GM12878 (cell line): ENCODE measurements at regions of chr20 and their contacts with region 1.

Region 1: GRCh38 chr20:46552460-46553420 is 2.3 kb upstream of the OCSTAMP start:
- DNase-seq: peak; percentile 85
- ATAC-seq: peak; percentile 85
- H3K4me3 ChIP-seq: peak overlapping the region; percentile 50; the same call in 1 of the 2 replicates
- H3K27ac ChIP-seq: peak overlapping the region; percentile 76
- H3K4me1 ChIP-seq: peaks cover 70% of the 10 kb centered on the region
- H3K27me3 ChIP-seq: no peaks in the 10 kb centered on the region
- CTCF ChIP-seq: no peak
- EP300 ChIP-seq: peak; percentile 67 to 74; a peak in 3 of 4 replicates
- POLR2A ChIP-seq: no peak
- RAD21 ChIP-seq: no peak

Region 2: DNA sequence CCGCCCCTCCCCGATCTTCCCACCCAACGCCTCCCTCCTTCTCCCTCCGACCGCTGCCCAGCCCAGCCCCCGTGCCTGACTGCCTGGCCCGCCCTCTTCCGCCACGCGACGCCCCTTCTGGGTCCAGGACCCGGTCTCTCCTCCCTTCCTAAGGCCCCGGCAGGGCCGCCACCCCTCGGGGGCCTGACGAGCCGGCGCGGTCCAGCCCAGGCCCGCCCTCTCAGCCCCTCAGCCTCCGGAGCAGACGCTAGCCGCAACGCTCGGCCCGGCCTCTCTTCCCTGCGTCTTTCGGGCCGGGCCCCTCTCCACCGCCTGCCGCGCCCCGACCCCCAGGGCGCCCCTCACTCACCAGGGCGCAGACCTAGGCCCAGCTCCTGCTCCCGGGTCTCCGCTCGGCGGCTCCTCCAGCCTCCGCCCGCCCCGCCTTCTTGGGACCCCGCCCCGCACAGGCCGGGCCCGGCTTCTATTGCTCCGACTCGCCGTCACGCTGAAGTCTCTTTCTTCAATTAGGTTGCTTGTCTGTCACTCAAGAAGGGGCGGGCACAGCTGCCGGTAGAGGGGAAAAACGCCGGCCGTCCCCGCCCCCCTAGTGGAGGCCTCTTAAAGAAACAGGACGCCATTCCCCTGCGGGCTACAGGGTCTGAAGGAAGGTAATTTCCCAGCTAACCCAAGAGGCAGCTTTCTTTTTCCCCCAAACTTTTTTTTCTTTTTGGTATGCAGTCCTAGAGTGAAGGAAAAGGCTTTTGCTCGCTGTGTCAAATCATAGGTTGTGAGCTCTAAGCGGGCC is 146.3 kb before region 1 on chr20 and contains the start of gene ELMO2:
- CTCF ChIA-PET with region 1: no interaction called
- POLR2A ChIA-PET with region 1: no interaction called
- RAD21 ChIA-PET with region 1: no interaction called
- SMC1A ChIA-PET with region 1: no interaction called
- in situ Hi-C with region 1: no loop called
- intact Hi-C with region 1: no loop called
- DNase-seq: peak; percentile 76
- ATAC-seq: peak; percentile 91
- H3K4me3 ChIP-seq: peak within 1 kb of the TSS; percentile 82
- H3K27ac ChIP-seq: peak within 1 kb of the TSS; percentile 68
- H3K4me1 ChIP-seq: peaks cover 43% of the 10 kb centered on the region
- H3K27me3 ChIP-seq: no peaks in the 10 kb centered on the region
- CTCF ChIP-seq: no peak
- EP300 ChIP-seq: no peak
- POLR2A ChIP-seq: peak; percentile 65; the same call in 1 of the 2 replicates
- RAD21 ChIP-seq: no peak
- polyA plus RNA-seq, gene ELMO2: 14.2 to 14.8 TPM

Region 3: DNA sequence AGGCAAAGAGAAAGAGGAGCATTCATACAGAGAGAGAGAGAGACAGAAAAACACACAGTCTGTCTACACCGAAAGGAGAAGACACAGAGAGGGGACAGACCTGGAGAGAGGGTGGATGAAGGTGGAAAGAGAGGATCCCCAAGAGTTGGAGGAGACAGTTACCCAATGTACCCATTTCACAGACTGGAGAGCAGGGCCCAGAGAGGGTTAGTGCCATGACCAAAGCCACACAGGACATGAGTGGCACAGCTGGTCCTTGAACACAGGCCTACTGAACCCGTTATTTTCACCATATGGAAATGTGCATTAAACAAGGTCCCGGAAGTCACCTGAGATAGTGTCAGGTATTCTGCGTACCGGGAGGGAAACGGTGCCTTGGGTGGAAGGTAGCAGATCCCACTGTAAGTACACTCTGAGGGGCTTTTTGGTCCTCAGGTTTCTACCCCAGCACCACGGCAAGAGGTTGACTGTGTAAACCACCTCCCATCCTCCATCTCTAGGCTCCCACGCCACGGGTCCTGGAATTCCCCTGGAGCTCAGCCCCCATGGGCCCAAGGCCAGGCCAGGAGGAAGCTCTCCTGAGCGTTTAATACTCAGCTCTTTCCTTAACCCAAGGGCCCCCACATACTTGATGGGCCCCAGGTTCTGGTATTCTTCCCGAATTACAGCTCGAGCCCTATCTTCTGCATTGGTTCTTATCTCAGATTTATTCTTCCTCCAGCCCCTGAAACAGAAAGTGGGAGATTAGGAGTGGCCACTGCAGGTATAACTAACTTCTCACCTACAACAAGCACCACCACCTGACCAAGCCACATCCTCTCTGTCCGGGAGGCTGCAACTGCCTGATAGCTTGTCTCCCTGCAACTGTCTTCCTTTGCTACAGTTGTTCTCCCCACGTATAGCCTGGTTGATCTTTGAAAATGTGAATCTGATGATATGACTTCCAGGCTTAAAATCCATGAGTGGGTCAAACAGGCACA is 36.1 kb after region 1 on chr20:
- CTCF ChIA-PET with region 1: interaction called, 6 read pairs
- POLR2A ChIA-PET with region 1: interaction called, 3 read pairs
- RAD21 ChIA-PET with region 1: interaction called, 5 read pairs
- SMC1A ChIA-PET with region 1: interaction called, 19 read pairs
- in situ Hi-C with region 1: no loop called
- intact Hi-C with region 1: no loop called
- DNase-seq: no peak
- ATAC-seq: peak; percentile 67
- H3K4me3 ChIP-seq: no peak overlapping the region
- H3K27ac ChIP-seq: no peak overlapping the region
- H3K4me1 ChIP-seq: peaks cover 12% of the 10 kb centered on the region
- H3K27me3 ChIP-seq: no peaks in the 10 kb centered on the region
- CTCF ChIP-seq: no peak
- EP300 ChIP-seq: no peak
- POLR2A ChIP-seq: no peak
- RAD21 ChIP-seq: no peak

Region 4: GRCh38 chr20:46681032-46681854 is 128.5 kb after region 1 on chr20:
- CTCF ChIA-PET with region 1: interaction called, 10 read pairs
- POLR2A ChIA-PET with region 1: interaction called, 9 read pairs
- RAD21 ChIA-PET with region 1: interaction called, 4 read pairs
- SMC1A ChIA-PET with region 1: interaction called, 12 read pairs
- in situ Hi-C with region 1: loop called (anchors 10 kb)
- intact Hi-C with region 1: no loop called
- DNase-seq: peak; percentile 27
- ATAC-seq: peak; percentile 80
- H3K4me3 ChIP-seq: no peak overlapping the region
- H3K27ac ChIP-seq: no peak overlapping the region
- H3K4me1 ChIP-seq: peaks cover 13% of the 10 kb centered on the region
- H3K27me3 ChIP-seq: no peaks in the 10 kb centered on the region
- CTCF ChIP-seq: peak; percentile 81 to 86 (median 83)
- EP300 ChIP-seq: no peak
- POLR2A ChIP-seq: no peak
- RAD21 ChIP-seq: peak; percentile 74